GM12878 (cell line): ENCODE measurements at regions of chr3 and their contacts with region 1.

Region 1: DNA sequence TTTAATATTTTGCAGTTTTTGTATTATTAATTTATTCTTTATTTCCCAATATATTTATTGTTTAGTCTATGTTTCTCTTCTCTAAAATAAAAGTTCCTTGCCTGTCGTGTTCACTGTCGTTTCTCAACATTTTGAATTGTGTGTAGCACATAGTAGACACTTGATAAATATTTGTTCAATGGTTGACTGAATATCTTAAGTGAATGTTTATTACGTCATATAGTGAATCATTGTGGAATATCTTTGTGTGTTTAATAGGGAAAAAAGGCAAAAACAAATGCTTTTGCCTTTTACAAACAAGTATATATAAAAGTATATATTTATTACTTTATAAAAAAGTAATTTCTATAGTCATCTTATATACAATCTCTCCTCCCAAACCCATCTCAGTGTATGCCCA is 572.3 kb downstream of the EPHA3 start:
- DNase-seq: no peak
- ATAC-seq: no peak
- H3K4me3 ChIP-seq: no peak overlapping the region
- H3K27ac ChIP-seq: no peak overlapping the region
- H3K4me1 ChIP-seq: no peaks in the 10 kb centered on the region
- H3K27me3 ChIP-seq: no peaks in the 10 kb centered on the region
- CTCF ChIP-seq: no peak
- EP300 ChIP-seq: no peak
- POLR2A ChIP-seq: no peak
- RAD21 ChIP-seq: no peak

Region 2: DNA sequence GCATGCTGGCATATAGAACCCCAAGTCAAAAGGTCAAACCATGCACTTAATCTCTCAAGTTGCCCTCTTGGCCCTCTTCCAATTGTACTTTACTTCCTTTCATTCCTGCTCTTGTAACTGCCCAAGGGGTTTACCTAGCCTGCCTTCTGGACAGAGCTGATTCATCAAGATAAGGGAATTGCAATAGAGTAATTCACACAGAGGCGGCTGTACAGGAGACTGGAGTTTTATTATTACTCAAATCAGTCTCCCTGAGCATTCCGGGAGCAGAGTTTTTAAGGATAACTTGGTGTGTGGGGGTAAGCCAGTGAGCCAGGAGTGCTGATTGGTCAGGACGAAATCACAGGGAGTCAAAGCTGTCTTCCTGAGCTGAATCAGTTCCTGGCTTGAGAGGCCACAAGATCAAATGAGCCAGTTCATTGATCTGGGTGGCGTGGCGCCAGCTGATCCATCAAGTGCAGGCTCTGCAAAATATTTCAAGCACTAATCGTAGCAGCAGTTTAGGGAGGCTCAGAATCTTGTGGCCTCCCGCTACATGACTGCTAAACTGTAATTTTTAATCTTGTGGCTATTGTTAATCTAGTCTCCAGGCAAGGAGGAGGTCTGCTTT is 17.7 kb after region 1 on chr3:
- CTCF ChIA-PET with region 1: no interaction called
- POLR2A ChIA-PET with region 1: no interaction called
- RAD21 ChIA-PET with region 1: interaction called, 3 read pairs
- SMC1A ChIA-PET with region 1: interaction called, 11 read pairs
- in situ Hi-C with region 1: no loop called
- intact Hi-C with region 1: no loop called
- DNase-seq: no peak
- ATAC-seq: no peak
- H3K4me3 ChIP-seq: no peak overlapping the region
- H3K27ac ChIP-seq: no peak overlapping the region
- H3K4me1 ChIP-seq: no peaks in the 10 kb centered on the region
- H3K27me3 ChIP-seq: no peaks in the 10 kb centered on the region
- CTCF ChIP-seq: no peak
- EP300 ChIP-seq: no peak
- POLR2A ChIP-seq: no peak
- RAD21 ChIP-seq: no peak